BJ (cell line): ENCODE measurements at regions of chr5 and their contacts with region 1.

Region 1: DNA sequence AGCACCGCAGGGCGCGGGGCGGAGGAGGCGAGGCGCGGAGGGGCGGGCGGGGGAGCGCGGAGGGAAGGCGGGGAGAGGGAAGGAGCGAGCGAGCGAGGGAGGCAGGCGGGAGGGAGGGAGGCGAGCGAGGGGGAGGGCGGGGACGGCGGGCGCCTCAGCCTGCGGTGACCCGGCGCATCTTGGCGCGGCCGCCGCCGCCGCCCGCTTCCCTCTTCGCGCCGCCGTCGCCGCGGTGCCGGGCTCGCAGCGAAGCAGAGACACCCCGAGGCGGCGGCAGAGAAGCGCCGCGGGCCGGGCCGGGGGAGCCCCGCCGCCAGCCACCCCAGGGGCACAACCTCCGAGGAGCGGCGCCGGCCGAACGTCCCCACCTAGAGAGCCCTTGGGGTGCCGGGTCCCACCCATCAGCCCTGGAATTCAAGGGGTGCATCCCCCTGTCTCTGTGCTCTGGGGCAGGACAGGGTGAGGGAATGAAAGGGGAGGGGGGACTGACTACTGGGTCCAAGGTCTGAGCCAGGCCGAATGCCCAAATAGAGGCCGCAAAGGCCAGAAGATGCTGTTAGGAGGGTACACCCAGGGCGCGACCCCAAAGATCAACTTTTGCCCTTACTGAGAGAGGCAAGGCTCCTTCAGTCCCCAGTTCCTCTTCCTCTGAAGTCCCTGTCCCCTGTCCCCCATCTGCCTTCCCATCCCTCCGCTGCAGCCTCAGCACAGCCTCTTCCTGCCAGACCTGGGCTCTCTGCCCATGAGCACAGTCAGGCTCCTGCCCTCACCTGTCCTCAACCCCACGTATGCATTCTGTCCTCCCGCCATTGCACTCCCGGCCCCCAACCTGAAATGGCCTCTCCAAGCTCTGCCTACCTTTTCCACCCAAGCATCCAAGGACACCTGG is at the start of gene ADAMTS2:
- DNase-seq: no peak
- H3K4me3 ChIP-seq: peak within 1 kb of the TSS; percentile 77
- H3K27me3 ChIP-seq: peaks cover 3% of the 10 kb centered on the region; the same call in 1 of the 2 replicates
- CTCF ChIP-seq: no peak
- polyA plus RNA-seq, gene ADAMTS2: 80.0 and 129 TPM in 2 replicates

Region 2: GRCh38 chr5:179166886-179167841 is 178.5 kb before region 1 on chr5:
- CTCF ChIA-PET with region 1: interaction called, 75 read pairs
- POLR2A ChIA-PET with region 1: no interaction called
- DNase-seq: no peak
- H3K4me3 ChIP-seq: no peak overlapping the region
- H3K27me3 ChIP-seq: no peaks in the 10 kb centered on the region
- CTCF ChIP-seq: peak; percentile 51

Region 3: DNA sequence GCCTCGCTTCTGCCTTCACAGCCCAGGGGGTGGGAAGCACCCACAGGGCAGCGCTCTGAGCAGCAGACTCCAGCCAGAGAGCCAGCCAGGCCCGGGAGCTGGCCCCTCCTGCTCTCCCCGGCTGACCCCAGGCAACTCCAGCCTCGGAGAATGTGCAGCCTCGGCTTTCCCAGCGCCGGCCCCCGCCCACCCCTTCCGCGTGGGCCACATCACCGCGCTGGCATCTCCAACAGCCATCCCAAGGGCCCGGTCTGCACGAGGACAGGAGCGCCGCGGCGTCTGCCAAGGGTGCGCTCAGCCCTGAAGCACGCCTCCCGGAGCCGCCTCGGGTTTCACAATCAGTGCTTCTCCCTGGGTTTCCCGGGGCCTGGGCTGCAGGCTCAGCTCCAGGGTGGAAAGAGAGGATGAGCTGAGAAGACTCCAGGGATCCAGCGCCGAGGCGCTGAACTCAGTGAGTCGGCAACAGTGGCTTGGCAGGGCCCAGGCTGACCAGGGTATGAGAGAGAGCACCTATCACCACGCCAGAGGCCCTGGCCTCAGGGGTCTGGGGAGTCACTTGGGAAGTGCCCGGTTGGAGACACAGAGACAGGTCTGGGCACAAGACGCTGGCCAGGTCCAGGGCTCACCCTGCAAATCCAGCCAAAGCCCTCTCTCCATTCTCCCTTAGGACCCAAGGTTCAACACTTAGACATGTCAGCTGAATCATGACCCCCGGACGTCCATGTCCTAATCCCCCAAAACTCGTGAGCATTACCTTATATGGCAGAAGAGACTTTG is 80.0 kb before region 1 on chr5:
- CTCF ChIA-PET with region 1: interaction called, 34 read pairs
- POLR2A ChIA-PET with region 1: no interaction called
- DNase-seq: peak; percentile 96
- H3K4me3 ChIP-seq: no peak overlapping the region
- H3K27me3 ChIP-seq: no peaks in the 10 kb centered on the region
- CTCF ChIP-seq: no peak

Region 4: GRCh38 chr5:179333796-179334761 is 11.6 kb before region 1 on chr5:
- CTCF ChIA-PET with region 1: interaction called, 18 read pairs
- POLR2A ChIA-PET with region 1: no interaction called
- DNase-seq: no peak
- H3K4me3 ChIP-seq: no peak overlapping the region
- H3K27me3 ChIP-seq: no peaks in the 10 kb centered on the region
- CTCF ChIP-seq: no peak

Region 5: DNA sequence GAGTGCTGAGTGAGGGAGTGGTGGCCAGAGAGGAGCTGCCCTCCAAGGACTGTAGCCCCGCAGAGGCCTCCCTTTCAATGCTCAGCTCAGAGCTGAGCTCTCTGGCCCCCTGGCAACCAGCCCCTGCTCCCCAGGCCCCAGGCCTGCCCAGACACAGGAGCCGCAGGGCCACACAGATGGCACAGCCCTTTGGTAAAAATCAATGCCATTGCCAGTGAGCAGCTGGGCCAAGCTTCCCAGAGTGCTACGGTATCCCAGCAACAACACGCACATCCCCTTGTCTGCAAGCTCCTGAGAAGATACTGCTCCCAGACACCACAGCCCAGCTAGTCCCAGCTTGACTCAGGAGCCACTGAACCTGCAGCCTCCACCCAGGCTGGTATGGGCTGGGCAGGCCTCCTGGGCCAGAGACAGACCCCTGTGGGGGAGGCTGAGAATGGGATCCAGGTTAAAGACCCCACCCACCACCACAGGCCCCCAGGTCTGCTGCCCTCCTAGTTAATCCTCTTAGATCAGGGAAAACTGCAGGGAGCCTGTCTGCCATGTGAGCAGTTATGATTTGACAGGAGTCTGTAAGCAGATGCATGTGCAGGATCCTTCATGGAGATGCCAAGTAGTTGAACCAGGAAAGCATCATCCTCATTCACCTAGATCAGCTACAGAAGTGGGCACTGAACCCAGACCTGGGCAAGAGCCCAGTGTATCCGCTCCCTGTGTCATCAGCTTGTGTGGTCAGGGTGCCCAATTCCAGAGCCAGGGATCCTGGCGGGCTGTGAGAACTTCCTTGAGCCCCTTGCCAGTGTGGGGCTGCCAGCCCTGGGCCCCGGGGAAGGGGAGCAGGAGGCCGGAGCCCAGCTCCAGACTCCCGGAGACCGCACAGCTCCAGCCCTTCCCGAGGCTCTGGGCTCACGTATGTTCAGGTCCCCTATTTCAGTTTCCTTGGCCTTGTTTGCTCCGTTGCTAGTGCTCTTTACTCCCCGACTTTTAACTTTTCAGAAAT is 26.3 kb after region 1 on chr5:
- CTCF ChIA-PET with region 1: interaction called, 15 read pairs
- POLR2A ChIA-PET with region 1: no interaction called
- DNase-seq: no peak
- H3K4me3 ChIP-seq: no peak overlapping the region
- H3K27me3 ChIP-seq: no peaks in the 10 kb centered on the region
- CTCF ChIP-seq: no peak

Region 6: DNA sequence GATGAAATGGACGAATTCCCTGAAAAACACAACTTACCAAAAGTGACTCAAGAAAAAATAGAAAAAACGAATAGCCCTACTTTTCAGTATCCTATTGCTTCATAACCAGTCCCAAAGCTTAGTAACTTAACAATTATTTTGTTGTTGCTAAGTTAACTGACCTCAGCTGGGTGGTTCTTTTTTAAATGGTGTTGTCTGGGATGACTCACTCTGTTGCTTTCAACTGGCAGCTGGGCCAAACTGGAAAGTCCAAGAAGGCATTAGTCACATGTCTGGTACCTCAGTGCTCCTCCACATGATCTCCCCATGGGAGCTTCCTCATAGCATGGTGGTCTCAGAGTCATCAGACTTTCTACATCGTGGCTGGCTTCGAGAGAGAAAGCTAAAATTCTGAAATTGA is 47.4 kb after region 1 on chr5:
- CTCF ChIA-PET with region 1: no interaction called
- POLR2A ChIA-PET with region 1: no interaction called
- DNase-seq: no peak
- H3K4me3 ChIP-seq: no peak overlapping the region
- H3K27me3 ChIP-seq: no peaks in the 10 kb centered on the region
- CTCF ChIP-seq: no peak

Region 7: GRCh38 chr5:179495906-179496455 is 150.3 kb after region 1 on chr5:
- CTCF ChIA-PET with region 1: interaction called, 16 read pairs
- POLR2A ChIA-PET with region 1: no interaction called
- DNase-seq: no peak
- H3K4me3 ChIP-seq: no peak overlapping the region
- H3K27me3 ChIP-seq: no peaks in the 10 kb centered on the region
- CTCF ChIP-seq: no peak

Region 8: GRCh38 chr5:179605026-179605833 is 259.6 kb after region 1 on chr5:
- CTCF ChIA-PET with region 1: no interaction called
- POLR2A ChIA-PET with region 1: no interaction called
- DNase-seq: no peak
- H3K4me3 ChIP-seq: no peak overlapping the region
- H3K27me3 ChIP-seq: no peaks in the 10 kb centered on the region
- CTCF ChIP-seq: no peak